Activated CD4-positive, alpha-beta memory T cell treated with anti-CD3 and anti-CD28 coated beads for 36 hours (primary cell): ENCODE measurements at regions of chr1 and their contacts with region 1.

Region 1: GRCh38 chr1:66242646-66243547 is 291.1 kb upstream of the SGIP1 start:
- DNase-seq: peak; percentile 84
- H3K4me3 Mint-ChIP-seq: no peak overlapping the region
- H3K27ac Mint-ChIP-seq: no peak overlapping the region
- H3K4me1 Mint-ChIP-seq: no peaks in the 10 kb centered on the region
- H3K27me3 Mint-ChIP-seq: peaks cover 6% of the 10 kb centered on the region

Region 2: DNA sequence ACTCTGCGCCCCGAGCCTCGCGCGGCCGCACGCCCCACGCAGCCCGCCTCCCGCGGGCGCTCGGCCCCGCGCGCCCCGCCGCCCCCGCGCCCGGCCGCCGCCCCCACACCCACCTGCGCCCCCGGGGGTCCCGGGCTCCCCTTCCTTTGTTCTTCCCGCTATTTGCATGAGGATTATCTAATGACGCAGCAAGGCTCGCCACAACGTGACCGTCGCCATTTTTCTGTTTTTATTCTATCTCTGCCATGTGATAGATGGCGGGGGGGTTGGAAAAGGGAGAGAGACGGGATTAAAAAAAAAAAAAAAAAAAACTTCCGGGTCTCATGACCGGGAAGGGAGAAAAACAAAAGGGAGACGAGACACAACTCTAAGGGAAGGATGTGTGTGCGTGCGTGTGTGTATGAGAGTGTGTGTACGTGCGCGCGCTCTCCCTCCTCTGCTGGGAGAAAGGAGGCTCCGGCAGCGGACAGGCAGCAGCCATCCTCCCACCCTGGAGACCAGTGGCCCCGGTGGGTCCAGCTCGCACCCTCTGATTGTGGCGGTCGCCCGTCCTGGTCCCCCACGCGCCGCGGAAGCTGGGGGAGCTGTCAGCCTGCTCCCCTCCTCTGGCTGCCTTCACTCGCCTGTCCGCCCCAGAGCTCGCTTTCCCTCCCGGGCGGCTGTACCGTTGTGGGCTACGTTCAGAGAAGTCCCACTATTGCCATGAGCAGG is 1175.3 kb before region 1 on chr1:
- CTCF ChIA-PET with region 1: no interaction called
- POLR2A ChIA-PET with region 1: no interaction called
- intact Hi-C with region 1: loop called (anchors 10 kb)
- DNase-seq: peak; percentile 66
- H3K4me3 Mint-ChIP-seq: peak overlapping the region; percentile 87
- H3K27ac Mint-ChIP-seq: peak overlapping the region; percentile 93
- H3K4me1 Mint-ChIP-seq: peaks cover 53% of the 10 kb centered on the region
- H3K27me3 Mint-ChIP-seq: no peaks in the 10 kb centered on the region

Region 3: GRCh38 chr1:65812065-65812464 is 430.8 kb before region 1 on chr1:
- CTCF ChIA-PET with region 1: interaction called, 4 read pairs
- POLR2A ChIA-PET with region 1: no interaction called
- intact Hi-C with region 1: loop called (anchors 1 kb)
- DNase-seq: peak; percentile 79
- H3K4me3 Mint-ChIP-seq: no peak overlapping the region
- H3K27ac Mint-ChIP-seq: peak overlapping the region; percentile 11
- H3K4me1 Mint-ChIP-seq: peaks cover 18% of the 10 kb centered on the region
- H3K27me3 Mint-ChIP-seq: peaks cover 17% of the 10 kb centered on the region

Region 4: DNA sequence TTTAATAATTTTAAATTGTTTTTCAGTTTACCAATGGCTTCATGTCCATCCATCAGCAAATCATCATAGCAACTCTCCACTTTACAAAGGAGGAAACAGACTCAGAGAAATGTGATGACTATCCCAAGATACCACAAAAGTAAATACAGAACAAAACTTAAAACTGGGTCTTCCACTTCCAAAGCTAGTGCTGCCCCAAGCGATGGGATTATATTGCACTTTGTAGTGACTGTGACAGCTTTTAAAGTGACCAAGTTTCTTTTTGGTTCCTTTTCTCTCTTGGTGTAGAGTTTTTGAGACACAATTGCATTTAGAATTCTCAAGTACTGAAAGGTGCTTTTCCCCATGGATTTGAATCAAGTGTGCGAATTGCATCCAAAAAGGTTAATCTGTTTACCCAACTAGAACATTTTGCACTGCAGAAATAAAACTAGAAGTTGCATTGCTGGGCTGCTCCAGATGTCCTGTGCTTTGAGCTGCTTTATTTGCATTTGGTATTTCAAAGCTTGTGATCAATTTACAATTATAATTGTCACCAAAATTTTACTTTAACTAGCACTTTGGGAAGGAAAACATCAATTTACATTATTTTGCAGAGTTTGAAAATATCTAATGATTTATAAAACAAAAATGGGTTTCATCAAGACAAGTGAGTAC is 130.0 kb before region 1 on chr1:
- CTCF ChIA-PET with region 1: no interaction called
- POLR2A ChIA-PET with region 1: no interaction called
- intact Hi-C with region 1: no loop called
- DNase-seq: no peak
- H3K4me3 Mint-ChIP-seq: no peak overlapping the region
- H3K27ac Mint-ChIP-seq: no peak overlapping the region
- H3K4me1 Mint-ChIP-seq: no peaks in the 10 kb centered on the region
- H3K27me3 Mint-ChIP-seq: peaks cover 12% of the 10 kb centered on the region

Region 5: GRCh38 chr1:66182551-66183178 is 60.2 kb before region 1 on chr1:
- CTCF ChIA-PET with region 1: interaction called, 31 read pairs
- POLR2A ChIA-PET with region 1: interaction called, 3 read pairs
- intact Hi-C with region 1: loop called (anchors 2 kb)
- DNase-seq: peak; percentile 66
- H3K4me3 Mint-ChIP-seq: no peak overlapping the region
- H3K27ac Mint-ChIP-seq: no peak overlapping the region
- H3K4me1 Mint-ChIP-seq: peaks cover 23% of the 10 kb centered on the region
- H3K27me3 Mint-ChIP-seq: peaks cover 7% of the 10 kb centered on the region

Region 6: DNA sequence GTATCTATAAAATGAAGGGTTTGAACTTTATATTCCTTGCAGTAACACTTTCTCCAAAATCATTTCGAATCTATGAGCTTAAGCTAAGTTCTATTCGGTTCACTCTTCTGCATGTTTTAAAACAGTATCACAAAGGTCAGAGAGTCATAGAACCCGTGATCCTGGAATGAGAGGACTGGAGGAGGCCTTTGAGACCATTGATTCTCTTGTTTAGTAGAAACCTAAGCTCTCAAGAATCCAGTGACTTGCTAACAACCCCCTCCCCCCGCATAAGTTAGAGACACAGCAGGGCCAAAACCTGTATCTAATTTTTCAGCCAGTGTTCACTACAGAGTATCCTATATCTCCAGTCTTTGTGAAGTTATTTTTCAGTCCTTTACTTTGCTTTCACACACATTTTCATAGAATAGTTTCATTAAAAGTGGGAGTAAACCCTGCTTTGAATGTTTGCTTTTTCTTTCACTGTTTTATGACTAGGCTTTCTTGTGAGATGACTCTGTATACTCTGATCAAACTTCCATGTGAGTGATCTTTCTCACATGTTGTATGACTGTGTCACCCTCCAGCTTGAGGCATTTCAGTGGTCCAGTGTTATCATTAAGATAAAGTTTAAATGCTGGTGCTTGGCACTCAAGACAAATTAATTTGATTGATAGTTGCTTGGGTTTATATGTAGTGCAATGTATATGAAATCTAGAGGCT is 15.7 kb after region 1 on chr1:
- CTCF ChIA-PET with region 1: interaction called, 28 read pairs
- POLR2A ChIA-PET with region 1: interaction called, 10 read pairs
- intact Hi-C with region 1: loop called (anchors 1 kb)
- DNase-seq: no peak
- H3K4me3 Mint-ChIP-seq: no peak overlapping the region
- H3K27ac Mint-ChIP-seq: peak overlapping the region; percentile 64
- H3K4me1 Mint-ChIP-seq: peaks cover 85% of the 10 kb centered on the region
- H3K27me3 Mint-ChIP-seq: no peaks in the 10 kb centered on the region

Region 7: DNA sequence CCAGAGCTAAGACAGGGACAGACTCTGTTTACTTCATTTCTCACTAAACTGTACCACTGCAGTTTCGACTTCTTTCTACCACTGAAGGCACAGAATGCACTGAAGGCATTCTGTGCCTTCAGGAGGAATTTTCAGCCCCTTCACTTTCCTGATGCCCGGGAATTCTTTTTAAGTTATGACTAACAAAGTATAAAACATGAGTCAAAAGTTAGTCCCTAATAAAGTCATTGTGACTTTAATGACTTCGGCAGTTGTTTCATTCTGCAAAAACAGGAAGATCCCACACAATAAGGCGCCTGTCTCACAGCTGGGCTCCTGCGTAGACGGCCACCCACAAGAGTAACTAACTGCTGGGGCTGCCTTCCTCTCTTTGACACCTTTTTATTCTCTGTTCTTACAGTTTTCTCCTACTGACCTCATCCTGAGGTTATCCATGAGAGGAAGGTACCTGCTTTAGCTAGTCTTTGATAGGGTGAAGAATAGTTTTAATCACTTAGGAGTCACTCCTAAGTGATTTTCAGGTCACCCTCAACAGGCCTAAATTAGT is 107.2 kb after region 1 on chr1:
- CTCF ChIA-PET with region 1: interaction called, 22 read pairs
- POLR2A ChIA-PET with region 1: interaction called, 9 read pairs
- intact Hi-C with region 1: loop called (anchors 1 kb)
- DNase-seq: peak; percentile 77
- H3K4me3 Mint-ChIP-seq: peak overlapping the region; percentile 65
- H3K27ac Mint-ChIP-seq: peak overlapping the region; percentile 83
- H3K4me1 Mint-ChIP-seq: peaks cover 93% of the 10 kb centered on the region
- H3K27me3 Mint-ChIP-seq: no peaks in the 10 kb centered on the region

Region 8: DNA sequence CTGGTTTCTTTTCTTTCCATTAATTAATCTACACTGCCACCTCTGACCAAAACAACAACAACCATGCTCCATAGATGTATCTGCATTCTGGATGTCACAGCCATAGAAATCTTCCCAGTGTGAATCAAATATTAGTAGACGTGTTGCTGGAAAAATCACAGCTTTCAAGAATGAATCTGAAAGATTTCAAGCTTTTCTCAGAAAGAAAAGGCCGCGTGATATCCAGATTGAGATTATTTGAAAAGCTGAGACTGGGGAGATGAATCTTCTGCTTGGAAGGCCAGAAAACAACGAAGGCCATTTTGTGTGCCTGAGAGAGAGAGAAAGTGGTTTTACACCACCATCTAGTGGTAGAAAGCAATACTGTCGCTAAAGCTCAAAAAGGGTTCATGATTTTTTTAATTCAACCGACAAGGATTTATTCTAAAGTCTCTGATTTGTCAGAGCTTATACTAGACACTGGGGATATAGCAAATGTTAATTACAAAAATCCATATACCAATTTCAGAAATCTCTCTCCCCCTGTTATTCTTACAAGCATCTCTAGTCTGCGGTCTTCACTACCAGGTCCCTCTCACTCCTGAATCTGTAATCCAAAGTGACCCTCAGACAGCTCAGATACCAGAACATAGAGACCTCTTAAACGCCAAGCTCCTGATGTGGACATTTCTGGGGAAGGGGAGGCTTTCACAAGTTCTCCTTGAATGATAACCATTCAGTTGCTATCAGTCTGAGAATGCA is 203.5 kb after region 1 on chr1:
- CTCF ChIA-PET with region 1: interaction called, 476 read pairs
- POLR2A ChIA-PET with region 1: interaction called, 13 read pairs
- intact Hi-C with region 1: loop called (anchors 1 kb)
- DNase-seq: peak; percentile 23
- H3K4me3 Mint-ChIP-seq: peak overlapping the region; percentile 6
- H3K27ac Mint-ChIP-seq: peak overlapping the region; percentile 86
- H3K4me1 Mint-ChIP-seq: peaks cover 21% of the 10 kb centered on the region
- H3K27me3 Mint-ChIP-seq: peaks cover 4% of the 10 kb centered on the region